MCF 10A (cell line): ENCODE measurements at regions of chr6 and their contacts with region 1.

Region 1: DNA sequence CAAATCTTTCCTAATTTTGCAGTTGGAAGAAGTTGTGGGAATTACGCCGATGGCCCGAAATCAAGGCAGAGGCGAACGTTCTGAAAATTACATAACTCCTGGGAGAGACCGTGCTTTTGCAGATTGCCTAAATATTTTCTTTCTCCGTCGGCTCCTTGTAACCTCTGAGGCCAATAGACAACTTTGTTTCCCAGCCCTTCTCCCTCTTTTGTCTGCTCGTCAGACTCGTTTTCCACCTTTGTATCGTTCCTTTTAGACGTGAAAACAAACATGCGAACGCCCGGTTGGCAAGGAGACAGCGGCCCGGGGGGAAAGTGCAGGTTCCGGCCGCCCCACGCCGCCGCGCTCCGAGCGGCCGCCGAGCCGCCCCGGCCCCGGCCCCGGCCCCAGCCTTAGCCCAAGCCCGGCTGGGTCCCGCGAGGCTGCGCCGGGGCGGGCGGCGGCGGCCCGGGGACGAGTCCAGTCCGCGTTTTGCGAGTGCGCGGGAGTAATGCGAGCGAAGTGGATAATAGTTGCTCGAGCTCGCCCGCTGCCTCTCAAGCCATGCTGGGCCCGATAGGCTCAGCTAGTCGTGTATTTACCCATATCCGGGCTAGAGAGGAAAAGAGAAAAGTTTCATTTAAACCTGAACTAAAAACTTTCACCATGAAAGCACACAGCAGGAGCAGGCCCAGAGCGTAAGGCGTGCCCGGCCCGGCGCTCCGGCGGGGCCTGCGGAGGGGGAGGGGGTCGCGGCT is at the start of gene ARID1B:
- DNase-seq: peak; percentile 79
- H3K4me3 Mint-ChIP-seq: peak within 1 kb of the TSS; percentile 79
- H3K27ac Mint-ChIP-seq: peak within 1 kb of the TSS; percentile 94
- H3K4me1 Mint-ChIP-seq: peaks cover 19% of the 10 kb centered on the region
- H3K27me3 Mint-ChIP-seq: no peaks in the 10 kb centered on the region
- CTCF ChIP-seq: no peak
- total RNA-seq, gene ARID1B: 62.2 and 63.9 TPM in 2 replicates

Region 2: DNA sequence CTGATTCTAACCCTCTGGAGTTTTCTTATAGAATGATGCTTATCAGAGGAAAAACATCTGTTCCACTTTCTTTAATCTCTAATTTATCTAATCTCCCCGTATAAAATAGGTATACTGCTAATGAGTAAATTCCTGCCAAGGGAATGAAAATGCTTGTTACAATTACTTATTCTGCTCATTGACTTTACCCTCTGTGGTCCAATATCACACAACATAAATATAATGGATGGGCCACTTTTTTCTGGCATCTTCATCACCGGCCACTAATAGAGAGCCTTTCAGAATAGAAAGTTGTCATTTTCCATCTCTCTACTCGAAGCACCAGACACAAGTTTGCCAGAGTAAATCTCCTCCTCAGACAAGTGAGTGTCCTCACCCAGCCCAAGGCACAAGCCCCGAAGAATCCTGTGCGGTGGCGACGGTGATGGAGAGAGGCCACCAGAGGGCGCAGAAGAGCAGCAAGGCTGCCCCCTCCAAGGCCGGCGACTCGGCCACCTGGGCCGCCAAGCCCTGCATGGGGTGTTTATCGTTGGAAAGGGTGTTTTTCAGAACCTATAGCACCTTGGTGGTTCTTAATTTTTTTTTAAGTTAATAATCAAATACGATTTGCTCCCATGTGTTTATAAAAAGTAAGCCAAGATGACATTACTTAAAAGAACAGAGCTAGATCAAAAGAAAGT is 212.7 kb before region 1 on chr6:
- CTCF ChIA-PET with region 1: no interaction called
- POLR2A ChIA-PET with region 1: no interaction called
- intact Hi-C with region 1: loop called (anchors 1 kb)
- DNase-seq: peak; percentile 65
- H3K4me3 Mint-ChIP-seq: no peak overlapping the region
- H3K27ac Mint-ChIP-seq: no peak overlapping the region
- H3K4me1 Mint-ChIP-seq: no peaks in the 10 kb centered on the region
- H3K27me3 Mint-ChIP-seq: no peaks in the 10 kb centered on the region
- CTCF ChIP-seq: peak; percentile 90

Region 3: GRCh38 chr6:156791320-156791850 is 14.4 kb after region 1 on chr6:
- CTCF ChIA-PET with region 1: interaction called, 4 read pairs
- POLR2A ChIA-PET with region 1: interaction called, 29 read pairs
- intact Hi-C with region 1: no loop called
- DNase-seq: peak; percentile 84
- H3K4me3 Mint-ChIP-seq: peak overlapping the region; percentile 42
- H3K27ac Mint-ChIP-seq: peak overlapping the region; percentile 49
- H3K4me1 Mint-ChIP-seq: peaks cover 22% of the 10 kb centered on the region
- H3K27me3 Mint-ChIP-seq: no peaks in the 10 kb centered on the region
- CTCF ChIP-seq: no peak

Region 4: GRCh38 chr6:156933201-156934068 is 156.4 kb after region 1 on chr6:
- CTCF ChIA-PET with region 1: no interaction called
- POLR2A ChIA-PET with region 1: interaction called, 3 read pairs
- intact Hi-C with region 1: loop called (anchors 5 kb)
- DNase-seq: no peak
- H3K4me3 Mint-ChIP-seq: peak overlapping the region; percentile 50
- H3K27ac Mint-ChIP-seq: no peak overlapping the region
- H3K4me1 Mint-ChIP-seq: peaks cover 16% of the 10 kb centered on the region
- H3K27me3 Mint-ChIP-seq: no peaks in the 10 kb centered on the region
- CTCF ChIP-seq: no peak

Region 5: GRCh38 chr6:157034436-157035230 is 257.6 kb after region 1 on chr6:
- CTCF ChIA-PET with region 1: interaction called, 3 read pairs
- POLR2A ChIA-PET with region 1: interaction called, 20 read pairs
- intact Hi-C with region 1: no loop called
- DNase-seq: peak; percentile 69
- H3K4me3 Mint-ChIP-seq: peak overlapping the region; percentile 72
- H3K27ac Mint-ChIP-seq: no peak overlapping the region
- H3K4me1 Mint-ChIP-seq: peaks cover 23% of the 10 kb centered on the region
- H3K27me3 Mint-ChIP-seq: no peaks in the 10 kb centered on the region
- CTCF ChIP-seq: peak; percentile 42